ENCODE measurements at regions of chr10 and their contacts with region 1.

Region 1: DNA sequence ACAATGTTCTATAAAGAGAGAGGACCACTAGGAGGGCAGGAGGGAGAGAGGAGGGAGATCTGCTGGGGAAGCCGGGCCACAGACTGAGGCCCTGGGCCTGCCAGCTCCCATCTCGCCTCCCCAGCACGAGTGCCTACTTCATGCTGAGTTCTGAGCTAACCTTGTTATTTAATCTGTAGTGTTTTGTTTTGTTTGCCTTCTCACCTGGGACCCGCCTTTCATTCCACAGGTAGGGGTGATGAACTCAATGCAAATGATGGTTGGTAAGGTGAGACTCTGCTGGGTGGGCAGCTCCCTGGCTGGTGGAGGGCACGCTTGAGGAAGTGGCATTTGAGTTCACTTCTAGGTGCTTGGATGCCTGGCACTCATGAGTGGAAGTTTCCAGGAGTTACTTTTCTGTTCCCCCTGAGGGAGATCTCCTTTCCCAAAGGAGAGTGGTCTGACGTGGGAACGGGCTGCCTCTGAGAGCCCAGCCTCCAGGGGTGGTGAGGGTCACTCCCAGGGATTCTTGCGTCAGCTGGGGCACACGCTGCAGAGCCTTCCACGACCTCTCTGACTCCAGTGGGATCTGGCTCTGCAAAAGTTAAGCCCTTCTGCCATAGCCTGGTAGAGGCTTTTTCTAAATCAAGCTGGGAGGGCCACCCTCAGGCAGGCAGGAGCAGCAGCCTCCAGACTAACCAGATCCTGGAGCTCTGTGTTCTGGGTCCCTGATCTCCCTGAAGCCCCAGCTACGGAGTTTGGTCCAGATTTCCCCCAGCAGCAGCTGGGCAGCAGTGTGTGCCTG is 22.4 kb downstream of the UBTD1 start:
- DNase-seq: no peak
- ATAC-seq: no peak
- H3K4me3 ChIP-seq: no peak overlapping the region
- H3K27ac ChIP-seq: no peak overlapping the region
- H3K4me1 ChIP-seq: peaks cover 9% of the 10 kb centered on the region
- H3K27me3 ChIP-seq: no peaks in the 10 kb centered on the region
- CTCF ChIP-seq: no peak
- POLR2A ChIP-seq: no peak
- RAD21 ChIP-seq: no peak

Region 2: DNA sequence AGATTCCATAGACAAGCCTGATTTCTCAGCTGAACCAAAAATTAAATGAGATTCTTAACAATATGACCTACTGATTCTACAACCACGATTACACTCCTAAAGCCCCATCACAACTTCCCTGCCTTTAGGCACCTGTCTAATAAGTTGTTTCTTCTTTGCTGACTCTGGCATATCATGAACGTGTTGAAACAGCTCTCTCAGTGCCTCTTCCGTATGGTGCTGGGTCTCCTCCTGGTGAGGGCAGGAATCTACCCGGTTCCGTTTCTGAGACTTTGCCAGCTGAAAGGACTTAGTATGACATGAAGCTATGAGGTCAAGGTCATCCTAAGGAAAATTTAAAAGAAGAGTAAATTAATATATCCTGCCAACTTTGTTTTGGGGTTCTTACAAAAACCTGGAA is 277.3 kb before region 1 on chr10:
- CTCF ChIA-PET with region 1: no interaction called
- POLR2A ChIA-PET with region 1: interaction called, 10 read pairs
- dilution Hi-C with region 1: no loop called
- in situ Hi-C with region 1: no loop called
- intact Hi-C with region 1: no loop called
- DNase-seq: no peak
- ATAC-seq: no peak
- H3K4me3 ChIP-seq: no peak overlapping the region
- H3K27ac ChIP-seq: no peak overlapping the region
- H3K4me1 ChIP-seq: no peaks in the 10 kb centered on the region
- H3K27me3 ChIP-seq: no peaks in the 10 kb centered on the region
- CTCF ChIP-seq: no peak
- POLR2A ChIP-seq: no peak
- RAD21 ChIP-seq: no peak